Heart right ventricle (tissue), 16 donors: ENCODE measurements at regions of chr21 and their contacts with region 1.

Region 1: DNA sequence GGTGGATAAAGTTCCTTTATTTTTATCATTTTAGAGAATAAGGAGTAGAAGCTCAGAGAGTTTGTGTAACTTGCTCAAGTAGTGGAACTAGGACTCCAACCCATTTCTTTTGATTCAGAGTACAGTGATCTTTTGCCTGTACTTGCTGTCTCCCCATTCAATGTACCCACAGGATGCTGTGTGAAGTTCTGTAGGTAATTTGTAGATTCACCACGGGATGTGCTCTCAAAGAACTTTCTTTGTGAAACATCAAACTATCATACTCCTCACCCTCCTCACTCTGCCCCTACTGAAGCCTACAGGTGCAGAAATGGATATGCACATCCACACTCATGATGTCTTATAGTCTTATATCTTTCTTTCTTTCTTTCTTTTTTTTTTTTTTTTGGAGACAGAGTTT is 65.8 kb upstream of the HSPA13 start:
- DNase-seq: no peak
- ATAC-seq: no peak
- H3K4me3 ChIP-seq: no peak overlapping the region
- H3K27ac ChIP-seq: no peak overlapping the region
- H3K4me1 ChIP-seq: no peaks in the 10 kb centered on the region
- H3K27me3 ChIP-seq: no peaks in the 10 kb centered on the region
- CTCF ChIP-seq: no peak

Region 2: DNA sequence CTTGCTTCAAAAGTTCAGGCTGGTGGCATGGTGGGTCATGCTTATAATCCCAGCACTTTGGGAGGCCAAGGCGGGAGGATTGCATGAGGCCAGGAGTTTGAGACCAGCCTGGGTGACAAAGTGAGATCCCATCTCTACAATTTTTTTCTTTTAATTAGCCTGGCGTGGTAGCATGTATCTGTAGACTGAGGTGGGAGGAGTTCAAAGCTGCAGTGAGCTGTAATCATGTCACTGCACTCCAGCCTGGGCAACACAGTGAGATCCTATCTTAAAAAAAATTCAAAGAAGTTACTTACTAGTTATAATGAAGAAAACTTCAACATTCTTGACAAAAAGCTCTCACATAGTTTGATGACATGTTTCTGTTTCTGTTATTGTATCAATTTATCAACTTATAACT is 52.1 kb after region 1 on chr21:
- intact Hi-C with region 1: no loop called
- DNase-seq: no peak
- ATAC-seq: no peak
- H3K4me3 ChIP-seq: no peak overlapping the region
- H3K27ac ChIP-seq: no peak overlapping the region
- H3K4me1 ChIP-seq: peaks cover 0 to 13% (median 0%) of the 10 kb centered on the region in 9 donors
- H3K27me3 ChIP-seq: no peaks in the 10 kb centered on the region
- CTCF ChIP-seq: no peak

Region 3: GRCh38 chr21:14533504-14534428 is 85.0 kb after region 1 on chr21:
- intact Hi-C with region 1: loop called in 1 of 10 experiments (anchors 10 kb)
- DNase-seq: no peak
- ATAC-seq: peak in 3 of 8 donors; percentile 19 to 42 (median 27)
- H3K4me3 ChIP-seq: peak overlapping the region in 1 of 10 donors; percentile 22
- H3K27ac ChIP-seq: peak overlapping the region in 1 of 10 donors; percentile 80
- H3K4me1 ChIP-seq: peaks cover 0 to 66% (median 0%) of the 10 kb centered on the region in 9 donors
- H3K27me3 ChIP-seq: no peaks in the 10 kb centered on the region
- CTCF ChIP-seq: no peak